ENCODE measurements at regions of chr7 and their contacts with region 1.

Region 1: DNA sequence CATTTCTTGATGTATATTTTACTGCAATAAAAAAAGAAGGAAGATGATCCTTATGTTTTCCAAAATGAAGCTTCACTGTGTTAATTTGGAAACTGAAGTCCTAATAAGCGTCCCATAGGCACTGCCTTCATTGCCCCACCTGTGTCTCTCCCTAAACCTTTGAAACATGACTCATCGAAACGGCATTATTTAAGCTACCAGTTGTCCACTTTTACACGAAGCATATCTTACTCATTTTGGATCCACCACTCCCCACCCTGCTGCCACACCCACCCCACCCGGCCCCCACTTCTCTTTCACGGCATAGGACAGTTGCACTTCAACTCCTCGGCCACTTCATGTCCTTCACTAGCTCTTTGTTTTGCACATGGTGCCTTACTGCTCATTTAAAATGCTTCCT is 85.5 kb downstream of the KIAA1549 start:
- DNase-seq: no peak
- H3K4me3 Mint-ChIP-seq: no peak overlapping the region
- H3K27ac Mint-ChIP-seq: no peak overlapping the region
- H3K4me1 Mint-ChIP-seq: peaks cover 38% of the 10 kb centered on the region
- H3K27me3 Mint-ChIP-seq: no peaks in the 10 kb centered on the region
- CTCF ChIP-seq: no peak

Region 2: GRCh38 chr7:138797841-138798271 is 97.8 kb before region 1 on chr7 and contains the starts of genes ATP6V0A4 and TMEM213:
- CTCF ChIA-PET with region 1: no interaction called
- intact Hi-C with region 1: no loop called
- DNase-seq: peak; percentile 72
- H3K4me3 Mint-ChIP-seq: peak within 1 kb of the TSS; percentile 65
- H3K27ac Mint-ChIP-seq: peak within 1 kb of the TSS; percentile 49
- H3K4me1 Mint-ChIP-seq: peaks cover 51% of the 10 kb centered on the region
- H3K27me3 Mint-ChIP-seq: no peaks in the 10 kb centered on the region
- CTCF ChIP-seq: no peak
- total RNA-seq, gene ATP6V0A4: 5.6 and 7.7 TPM in 2 replicates
- total RNA-seq, gene TMEM213: 9.8 and 11.3 TPM in 2 replicates

Region 3: DNA sequence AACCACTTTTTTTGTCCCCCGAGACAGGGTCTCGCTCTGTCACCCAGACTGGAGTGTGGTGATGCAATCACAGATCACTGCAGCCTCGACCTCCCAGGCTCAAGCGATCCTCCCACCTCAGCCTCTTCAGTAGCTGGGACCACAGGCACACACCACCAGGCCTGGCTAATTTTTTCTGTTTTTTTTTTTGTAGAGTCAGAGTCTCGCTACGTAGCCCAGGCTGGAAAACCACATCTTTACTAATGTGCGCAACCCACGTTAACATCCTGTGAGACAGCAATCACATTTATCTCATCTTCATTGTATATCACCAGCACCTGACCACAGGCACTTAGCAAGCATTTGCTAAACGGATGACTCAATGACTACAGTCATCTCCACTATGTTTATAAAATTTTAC is 19.9 kb before region 1 on chr7:
- CTCF ChIA-PET with region 1: no interaction called
- intact Hi-C with region 1: no loop called
- DNase-seq: no peak
- H3K4me3 Mint-ChIP-seq: no peak overlapping the region
- H3K27ac Mint-ChIP-seq: no peak overlapping the region
- H3K4me1 Mint-ChIP-seq: peaks cover 22% of the 10 kb centered on the region
- H3K27me3 Mint-ChIP-seq: no peaks in the 10 kb centered on the region
- CTCF ChIP-seq: no peak

Region 4: DNA sequence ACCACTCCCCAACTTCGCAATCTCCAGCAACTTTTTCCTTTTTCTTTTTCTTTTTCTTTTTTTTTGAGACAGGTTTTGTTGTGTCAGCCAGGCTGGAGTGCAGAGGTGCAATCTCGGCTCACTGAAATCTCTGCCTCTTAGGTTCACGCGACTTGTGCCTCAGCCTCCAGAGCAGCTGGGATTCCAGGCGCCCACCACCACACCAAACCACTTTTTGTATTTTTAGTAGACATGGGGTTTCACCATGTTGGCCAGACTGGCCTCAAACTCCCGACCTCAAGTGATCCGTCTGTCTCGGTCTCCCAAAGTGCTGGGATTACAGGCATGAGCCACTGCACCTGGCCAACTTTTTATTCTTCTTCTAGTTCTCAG is 30.5 kb after region 1 on chr7:
- CTCF ChIA-PET with region 1: no interaction called
- intact Hi-C with region 1: loop called (anchors 1 kb)
- DNase-seq: no peak
- H3K4me3 Mint-ChIP-seq: no peak overlapping the region
- H3K27ac Mint-ChIP-seq: no peak overlapping the region
- H3K4me1 Mint-ChIP-seq: no peaks in the 10 kb centered on the region
- H3K27me3 Mint-ChIP-seq: no peaks in the 10 kb centered on the region
- CTCF ChIP-seq: no peak

Measured in Calu3 (cell line).